ENCODE measurements at regions of chr1 and their contacts with region 1.

Region 1: GRCh38 chr1:108691942-108692723 is at the start of gene PRPF38B:
- DNase-seq: peak; percentile 93
- H3K4me3 Mint-ChIP-seq: peak within 1 kb of the TSS; percentile 98
- H3K27ac Mint-ChIP-seq: peak within 1 kb of the TSS; percentile 99
- H3K4me1 Mint-ChIP-seq: peaks cover 30% of the 10 kb centered on the region
- H3K27me3 Mint-ChIP-seq: peaks cover 5% of the 10 kb centered on the region
- total RNA-seq, gene PRPF38B: 86.7 and 88.5 TPM in 2 replicates

Region 2: GRCh38 chr1:108209430-108210108 is 482.6 kb before region 1 on chr1:
- intact Hi-C with region 1: loop called (anchors 5 kb)
- DNase-seq: no peak
- H3K4me3 Mint-ChIP-seq: no peak overlapping the region
- H3K27ac Mint-ChIP-seq: no peak overlapping the region
- H3K4me1 Mint-ChIP-seq: peaks cover 27% of the 10 kb centered on the region
- H3K27me3 Mint-ChIP-seq: peaks cover 54% of the 10 kb centered on the region

Region 3: GRCh38 chr1:108559215-108560186 is 132.6 kb before region 1 on chr1 and contains the start of gene EEIG2:
- intact Hi-C with region 1: loop called (anchors 1 kb)
- DNase-seq: peak; percentile 87
- H3K4me3 Mint-ChIP-seq: peak within 1 kb of the TSS; percentile 95
- H3K27ac Mint-ChIP-seq: peak within 1 kb of the TSS; percentile 77
- H3K4me1 Mint-ChIP-seq: peaks cover 40% of the 10 kb centered on the region
- H3K27me3 Mint-ChIP-seq: peaks cover 4% of the 10 kb centered on the region
- total RNA-seq, gene EEIG2: 25.4 and 26.4 TPM in 2 replicates

Region 4: GRCh38 chr1:108661030-108661620 is 31.0 kb before region 1 on chr1 and contains the start of gene HENMT1:
- intact Hi-C with region 1: loop called (anchors 1 kb)
- DNase-seq: peak; percentile 76
- H3K4me3 Mint-ChIP-seq: peak within 1 kb of the TSS; percentile 85
- H3K27ac Mint-ChIP-seq: peak within 1 kb of the TSS; percentile 95
- H3K4me1 Mint-ChIP-seq: peaks cover 40% of the 10 kb centered on the region
- H3K27me3 Mint-ChIP-seq: no peaks in the 10 kb centered on the region
- total RNA-seq, gene HENMT1: 16.5 and 17.7 TPM in 2 replicates

Region 5: DNA sequence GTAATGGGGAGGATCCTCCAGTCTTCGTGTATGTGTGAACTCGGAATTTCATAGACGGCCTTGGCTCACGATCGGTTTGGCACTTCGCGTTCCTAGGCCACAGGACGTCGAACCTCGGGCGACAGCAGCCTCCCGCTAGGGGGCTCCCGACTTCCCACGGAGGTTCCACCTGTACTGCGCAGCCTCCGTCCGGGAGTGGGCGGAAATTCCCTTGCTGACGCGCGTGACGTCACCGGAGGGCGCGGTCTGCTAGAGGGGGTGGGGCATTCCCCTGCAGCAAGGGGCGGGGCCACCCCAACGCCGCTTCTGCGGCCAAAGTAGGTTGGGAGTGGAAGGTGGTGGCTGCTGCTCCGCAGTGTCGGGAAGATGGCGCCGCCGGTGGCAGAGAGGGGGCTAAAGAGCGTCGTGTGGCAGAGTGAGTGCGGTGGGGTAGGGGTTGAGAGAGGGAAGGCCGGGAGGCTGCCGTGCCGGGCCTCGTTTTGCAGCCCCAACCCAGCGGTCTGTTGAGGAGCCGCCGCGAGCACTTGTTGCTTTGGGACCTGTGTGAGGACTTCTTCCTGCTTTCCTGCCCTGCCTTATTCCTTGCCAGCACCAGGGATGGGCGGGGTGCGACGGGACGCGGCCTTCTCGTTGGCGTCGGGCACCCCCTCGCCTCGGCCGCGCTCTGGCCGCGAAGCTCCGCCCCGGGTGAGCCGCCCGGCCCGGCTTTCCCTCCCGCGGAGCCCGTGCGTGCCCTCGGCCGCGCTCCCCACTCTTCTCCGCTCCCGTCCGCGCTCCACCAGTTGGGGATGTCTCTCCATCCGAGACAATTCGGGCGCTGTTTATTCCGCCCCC is 54.5 kb after region 1 on chr1 and contains the start of gene STXBP3:
- intact Hi-C with region 1: loop called (anchors 1 kb)
- DNase-seq: peak; percentile 98
- H3K4me3 Mint-ChIP-seq: peak within 1 kb of the TSS; percentile 99
- H3K27ac Mint-ChIP-seq: peak within 1 kb of the TSS; percentile 99
- H3K4me1 Mint-ChIP-seq: peaks cover 26% of the 10 kb centered on the region
- H3K27me3 Mint-ChIP-seq: no peaks in the 10 kb centered on the region
- total RNA-seq, gene STXBP3: 46.5 and 51.7 TPM in 2 replicates

Region 6: GRCh38 chr1:108897865-108898720 is 206.0 kb after region 1 on chr1:
- intact Hi-C with region 1: loop called (anchors 1 kb)
- DNase-seq: no peak
- H3K4me3 Mint-ChIP-seq: no peak overlapping the region
- H3K27ac Mint-ChIP-seq: no peak overlapping the region
- H3K4me1 Mint-ChIP-seq: no peaks in the 10 kb centered on the region
- H3K27me3 Mint-ChIP-seq: no peaks in the 10 kb centered on the region

Region 7: GRCh38 chr1:109112652-109113285 is 420.6 kb after region 1 on chr1:
- intact Hi-C with region 1: loop called (anchors 5 kb)
- DNase-seq: peak; percentile 82
- H3K4me3 Mint-ChIP-seq: peak overlapping the region; percentile 69
- H3K27ac Mint-ChIP-seq: peak overlapping the region; percentile 64
- H3K4me1 Mint-ChIP-seq: peaks cover 36% of the 10 kb centered on the region
- H3K27me3 Mint-ChIP-seq: peaks cover 22% of the 10 kb centered on the region

Measured in activated T-helper 2 cell treated with anti-CD3 and anti-CD28 coated beads, Interferon-gamma antibody, Interleukin-2, Interleukin-4, amounts not matched to agents 10 μg/mL and 5 μg/mL and 100 μg/mL, durations not matched to agents 14 hours and 24 hours and 36 hours (primary cell).